ENCODE measurements at regions of chr1 and their contacts with region 1.

Region 1: GRCh38 chr1:40014812-40015594 is 25.5 kb upstream of the CAP1 start:
- DNase-seq: peak; percentile 57
- H3K4me3 ChIP-seq: no peak overlapping the region
- H3K27me3 ChIP-seq: no peaks in the 10 kb centered on the region
- CTCF ChIP-seq: no peak

Region 2: DNA sequence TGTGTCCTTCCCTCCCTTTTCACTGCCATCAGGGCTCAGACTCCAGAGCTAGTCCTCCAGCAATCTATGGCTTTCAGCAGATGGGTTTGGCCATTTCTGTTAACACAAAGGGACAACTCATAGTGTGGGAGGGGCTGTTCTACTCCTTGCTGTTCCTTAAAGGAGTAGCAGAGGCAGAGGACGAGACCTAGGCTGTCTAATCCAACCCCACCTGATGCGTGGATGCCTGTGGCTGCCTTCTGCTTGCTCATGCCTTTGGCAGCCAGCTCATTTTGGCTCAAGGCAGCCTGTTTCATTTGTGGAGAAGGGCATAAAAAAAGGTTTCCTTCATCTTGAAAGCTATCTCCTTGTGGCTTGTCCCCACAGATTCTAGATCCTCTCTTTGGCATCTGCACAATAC is 33.0 kb before region 1 on chr1:
- CTCF ChIA-PET with region 1: no interaction called
- POLR2A ChIA-PET with region 1: interaction called, 15 read pairs
- DNase-seq: peak; percentile 64
- H3K4me3 ChIP-seq: no peak overlapping the region
- H3K27me3 ChIP-seq: no peaks in the 10 kb centered on the region
- CTCF ChIP-seq: no peak

Measured in BJ (cell line).